Transverse colon (tissue), 4 donors: ENCODE measurements at regions of chr5 and their contacts with region 1.

Region 1: DNA sequence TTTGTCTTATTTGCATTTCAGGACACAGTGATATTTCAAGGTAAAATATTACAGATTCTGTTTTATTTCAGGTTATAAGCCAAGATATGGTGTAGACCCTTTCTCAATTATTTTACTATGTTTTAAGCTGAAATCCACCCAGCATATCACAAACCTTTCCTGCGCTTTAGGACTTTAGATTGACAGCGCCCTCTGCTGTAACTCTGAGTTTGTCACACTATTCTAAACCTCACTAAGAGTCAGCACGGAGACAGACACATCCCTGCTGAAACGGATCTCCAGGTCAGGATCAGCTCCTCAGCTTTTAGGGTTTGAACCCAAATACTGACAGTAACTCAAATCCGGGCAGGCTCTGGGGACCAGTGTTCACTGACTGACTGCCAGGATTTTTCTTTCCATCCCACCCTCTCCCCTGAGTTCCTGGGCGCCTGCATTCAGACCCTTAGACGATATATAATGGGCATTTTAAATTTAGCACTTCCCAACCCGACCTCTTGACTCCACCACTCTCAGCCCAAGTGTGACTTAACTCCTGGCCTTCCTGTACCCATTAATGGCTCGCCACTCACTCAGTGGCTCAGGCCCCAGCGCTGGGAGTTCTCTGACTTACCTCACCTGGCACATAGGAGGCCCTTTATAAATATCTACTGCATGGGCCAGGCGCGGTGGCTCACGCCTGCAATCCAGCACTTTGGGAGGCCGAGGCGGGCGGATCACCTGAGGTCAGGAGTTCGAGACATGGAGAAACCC is 33.5 kb downstream of the TLX3 start:
- DNase-seq: peak; percentile 12
- H3K4me3 ChIP-seq: no peak overlapping the region
- H3K27ac ChIP-seq: no peak overlapping the region
- H3K4me1 ChIP-seq: no peaks in the 10 kb centered on the region
- H3K27me3 ChIP-seq: peaks cover 48% of the 10 kb centered on the region
- CTCF ChIP-seq: peak; percentile 28 to 48 (median 42)
- EP300 ChIP-seq: no peak
- POLR2A ChIP-seq: no peak

Region 2: GRCh38 chr5:169904059-169904458 is 1438.5 kb before region 1 on chr5:
- in situ Hi-C with region 1: no loop called
- intact Hi-C with region 1: no loop called
- DNase-seq: no peak
- H3K4me3 ChIP-seq: no peak overlapping the region
- H3K27ac ChIP-seq: no peak overlapping the region
- H3K4me1 ChIP-seq: no peaks in the 10 kb centered on the region
- H3K27me3 ChIP-seq: no peaks in the 10 kb centered on the region
- CTCF ChIP-seq: no peak
- EP300 ChIP-seq: no peak
- POLR2A ChIP-seq: no peak

Region 3: DNA sequence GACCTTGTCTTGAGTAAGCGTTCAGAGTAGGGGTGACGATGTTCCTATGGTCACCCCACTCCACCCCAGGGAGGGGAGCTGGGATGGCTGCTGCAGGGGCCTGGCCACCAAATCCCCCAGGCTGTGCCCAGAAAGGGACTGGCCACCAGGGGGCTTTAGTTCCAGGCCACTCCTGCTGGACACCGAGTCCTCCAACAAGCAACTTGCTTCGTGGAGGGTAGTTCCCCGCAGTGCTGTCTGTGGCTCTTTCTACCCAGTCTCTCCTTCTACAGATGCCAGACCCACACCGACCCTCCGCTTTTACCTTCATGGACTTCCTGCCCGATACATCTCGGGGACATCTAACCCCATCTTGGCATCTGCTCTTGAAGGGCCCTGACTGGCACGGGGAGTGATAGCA is 594.7 kb before region 1 on chr5:
- in situ Hi-C with region 1: loop called in 3 of 4 experiments (anchors 25 kb)
- intact Hi-C with region 1: no loop called
- DNase-seq: no peak
- H3K4me3 ChIP-seq: no peak overlapping the region
- H3K27ac ChIP-seq: no peak overlapping the region
- H3K4me1 ChIP-seq: peaks cover 10 to 47% (median 18%) of the 10 kb centered on the region in 4 donors
- H3K27me3 ChIP-seq: peaks cover 15% of the 10 kb centered on the region
- CTCF ChIP-seq: peak in 1 of 5 experiments; percentile 21
- EP300 ChIP-seq: no peak
- POLR2A ChIP-seq: no peak

Region 4: GRCh38 chr5:170809551-170809950 is 533.0 kb before region 1 on chr5:
- in situ Hi-C with region 1: loop called in 2 of 4 experiments (anchors 25 kb)
- intact Hi-C with region 1: no loop called
- DNase-seq: peak; percentile 8
- H3K4me3 ChIP-seq: no peak overlapping the region
- H3K27ac ChIP-seq: no peak overlapping the region
- H3K4me1 ChIP-seq: no peaks in the 10 kb centered on the region
- H3K27me3 ChIP-seq: no peaks in the 10 kb centered on the region
- CTCF ChIP-seq: peak in 4 of 5 experiments; percentile 26 to 36 (median 32)
- EP300 ChIP-seq: no peak
- POLR2A ChIP-seq: no peak

Region 5: DNA sequence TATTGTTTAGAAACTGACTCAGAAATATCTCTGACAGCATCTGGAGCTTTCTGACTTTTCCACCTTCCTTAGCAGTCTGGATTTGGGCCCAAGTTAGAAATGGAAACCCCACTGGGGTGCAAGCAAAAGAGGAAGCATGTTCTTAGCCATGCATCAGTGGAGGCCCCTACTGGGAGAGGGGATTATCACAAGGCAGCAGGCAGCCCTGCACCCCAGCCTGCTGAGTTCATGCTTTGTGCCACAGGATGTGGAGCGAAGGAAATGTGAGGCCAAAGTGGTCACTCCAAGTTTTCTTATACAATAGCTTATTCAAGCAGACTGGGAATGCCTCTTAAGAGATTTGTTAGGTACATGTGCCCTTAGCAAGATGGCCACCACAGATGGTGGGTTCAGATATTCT is 179.9 kb before region 1 on chr5:
- in situ Hi-C with region 1: no loop called
- intact Hi-C with region 1: no loop called
- DNase-seq: no peak
- H3K4me3 ChIP-seq: no peak overlapping the region
- H3K27ac ChIP-seq: no peak overlapping the region
- H3K4me1 ChIP-seq: no peaks in the 10 kb centered on the region
- H3K27me3 ChIP-seq: no peaks in the 10 kb centered on the region
- CTCF ChIP-seq: peak in 1 of 5 experiments; percentile 3
- EP300 ChIP-seq: no peak
- POLR2A ChIP-seq: no peak

Region 6: GRCh38 chr5:171207256-171207847 is 135.2 kb before region 1 on chr5:
- in situ Hi-C with region 1: loop called in 2 of 4 experiments (anchors 10 to 25 kb)
- intact Hi-C with region 1: no loop called
- DNase-seq: no peak
- H3K4me3 ChIP-seq: no peak overlapping the region
- H3K27ac ChIP-seq: no peak overlapping the region
- H3K4me1 ChIP-seq: no peaks in the 10 kb centered on the region
- H3K27me3 ChIP-seq: no peaks in the 10 kb centered on the region
- CTCF ChIP-seq: peak in 4 of 5 experiments; percentile 24 to 40 (median 36)
- EP300 ChIP-seq: no peak
- POLR2A ChIP-seq: no peak